ENCODE measurements at regions of chr11 and their contacts with region 1.

Region 1: DNA sequence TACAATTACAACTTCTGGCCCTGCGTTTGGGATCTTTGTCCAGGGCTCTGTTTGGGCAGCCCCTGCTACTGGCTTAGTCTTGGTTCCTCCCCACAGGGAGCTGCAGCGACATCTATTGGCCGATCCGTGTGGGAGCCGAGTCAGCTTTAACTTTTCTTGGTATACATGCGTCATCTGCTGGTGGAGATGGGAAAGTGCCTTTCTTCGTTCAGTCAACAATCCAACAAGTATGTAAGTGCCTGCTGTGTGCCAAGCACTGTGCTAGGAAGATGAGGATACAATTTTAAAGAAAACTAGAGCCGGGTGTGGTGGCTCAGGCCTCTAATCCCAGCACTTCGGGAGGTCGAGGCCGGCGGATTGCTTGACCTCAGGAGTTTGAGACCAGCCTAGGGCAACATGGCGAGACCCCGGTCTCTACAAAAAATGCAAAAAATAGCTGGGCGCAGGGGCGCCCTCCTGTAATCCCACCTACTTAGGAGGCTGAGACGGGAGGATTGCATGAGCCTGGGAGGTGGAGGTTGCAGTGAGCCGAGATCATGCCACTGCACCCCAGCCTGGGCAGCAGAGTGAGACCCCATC is 8.2 kb downstream of the TPBGL start:
- DNase-seq: peak; percentile 37
- H3K4me3 ChIP-seq: no peak overlapping the region
- CTCF ChIP-seq: peak; percentile 96

Region 2: DNA sequence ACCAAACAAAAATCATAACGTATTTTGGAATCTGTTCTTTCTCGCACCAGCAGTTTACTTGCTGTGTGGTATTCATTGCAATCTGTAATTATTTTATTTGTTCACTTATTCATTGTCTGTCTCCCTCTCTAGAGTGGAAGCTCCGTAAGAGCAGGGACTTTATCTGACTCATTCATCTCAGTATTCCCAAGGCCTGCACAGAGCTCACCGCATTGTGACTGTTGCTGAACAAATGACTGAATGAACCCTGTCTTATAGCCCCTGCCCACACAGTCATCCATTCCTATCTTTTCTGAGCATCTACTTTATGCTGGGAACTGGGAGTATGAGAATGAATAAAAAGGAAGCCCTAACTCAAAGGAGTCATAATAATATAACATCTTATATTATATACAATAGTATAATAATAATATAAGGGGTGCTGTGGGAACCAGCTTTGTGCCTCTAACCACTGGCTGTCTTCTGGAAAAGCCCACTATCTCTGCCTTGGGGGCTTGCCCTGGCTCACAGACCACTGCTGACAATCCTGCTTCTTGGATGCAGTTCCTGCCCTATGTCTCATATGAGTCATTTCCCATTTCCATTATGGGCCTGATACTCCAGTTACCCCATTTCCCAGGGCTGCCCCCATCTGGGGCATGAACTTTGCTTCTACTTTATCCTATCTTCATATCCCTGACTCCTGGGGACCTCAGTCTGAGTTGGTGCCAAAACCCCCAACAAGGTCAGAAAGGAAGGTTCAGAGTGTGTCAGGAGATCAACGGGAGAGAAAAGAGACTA is 310.9 kb before region 1 on chr11:
- CTCF ChIA-PET with region 1: interaction called, 149 read pairs
- POLR2A ChIA-PET with region 1: no interaction called
- DNase-seq: no peak
- H3K4me3 ChIP-seq: no peak overlapping the region
- CTCF ChIP-seq: no peak

Region 3: DNA sequence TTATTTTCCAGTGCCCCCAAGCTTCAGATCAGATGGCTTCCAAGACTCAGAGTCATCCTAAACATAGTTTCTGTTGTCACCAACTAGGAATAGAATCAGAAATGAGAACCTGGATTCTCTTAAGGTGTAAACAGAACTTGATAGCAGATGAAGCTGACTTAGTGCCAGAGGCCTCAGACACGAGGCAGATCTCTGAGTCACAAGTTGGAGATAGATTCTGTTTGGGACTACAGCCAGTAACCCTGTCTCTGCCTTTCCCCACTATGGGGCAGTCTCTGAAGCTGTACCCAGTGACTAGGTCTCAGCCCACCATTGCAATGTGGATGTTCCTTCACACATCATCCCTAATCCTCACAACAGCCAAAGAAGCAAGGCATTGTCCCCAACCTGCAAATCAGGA is 234.7 kb before region 1 on chr11:
- CTCF ChIA-PET with region 1: interaction called, 69 read pairs
- POLR2A ChIA-PET with region 1: no interaction called
- DNase-seq: peak; percentile 57
- H3K4me3 ChIP-seq: no peak overlapping the region
- CTCF ChIP-seq: no peak

Region 4: DNA sequence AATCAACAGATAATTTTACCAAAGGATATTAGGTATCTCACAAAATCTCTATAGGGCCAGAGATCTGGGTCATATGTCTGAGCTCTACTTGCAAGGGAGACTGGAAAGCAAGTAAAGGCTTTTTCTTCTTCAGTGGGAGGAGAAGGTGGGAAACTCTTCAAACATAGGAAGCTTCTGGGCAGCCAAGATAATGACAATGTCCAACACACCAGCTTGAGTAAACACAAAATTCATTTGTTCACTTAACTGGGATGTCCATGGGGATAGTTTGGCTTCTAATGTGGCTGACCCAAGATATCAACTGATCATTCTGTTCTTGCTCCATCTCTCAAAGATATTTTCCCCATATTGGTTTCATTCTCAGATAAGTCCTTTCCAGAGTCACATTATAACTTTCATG is 189.5 kb before region 1 on chr11:
- CTCF ChIA-PET with region 1: no interaction called
- POLR2A ChIA-PET with region 1: no interaction called
- DNase-seq: no peak
- H3K4me3 ChIP-seq: no peak overlapping the region
- CTCF ChIP-seq: no peak

Region 5: DNA sequence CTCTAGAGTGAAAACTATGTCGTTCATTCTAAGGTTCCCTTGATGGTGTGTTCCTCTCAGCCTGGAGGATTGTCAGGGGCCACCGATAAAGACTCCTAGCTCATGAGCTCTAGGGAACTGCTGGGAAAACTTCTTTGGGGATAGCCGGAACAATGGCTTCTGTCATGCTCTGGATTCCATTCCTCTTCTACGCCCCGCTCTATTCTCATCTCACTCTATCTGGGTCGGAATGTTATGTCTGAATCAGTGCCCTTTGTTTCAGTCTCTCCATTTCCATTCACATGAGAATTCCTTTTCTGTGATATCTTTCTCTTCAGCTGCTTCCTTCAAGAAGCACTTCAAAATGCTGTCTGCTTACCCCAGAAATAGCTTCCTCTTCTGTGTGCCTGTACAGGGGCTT is 114.8 kb before region 1 on chr11:
- CTCF ChIA-PET with region 1: interaction called, 501 read pairs
- POLR2A ChIA-PET with region 1: no interaction called
- DNase-seq: no peak
- H3K4me3 ChIP-seq: no peak overlapping the region
- CTCF ChIP-seq: no peak

Region 6: GRCh38 chr11:75150879-75151278 is 97.9 kb before region 1 on chr11 and contains the start of gene SLCO2B1:
- CTCF ChIA-PET with region 1: interaction called, 501 read pairs
- POLR2A ChIA-PET with region 1: no interaction called
- DNase-seq: no peak
- H3K4me3 ChIP-seq: no peak within 1 kb of the TSS
- CTCF ChIP-seq: no peak

Region 7: GRCh38 chr11:75263944-75264349 is 15.2 kb after region 1 on chr11:
- CTCF ChIA-PET with region 1: interaction called, 60 read pairs
- POLR2A ChIA-PET with region 1: no interaction called
- DNase-seq: no peak
- H3K4me3 ChIP-seq: no peak overlapping the region
- CTCF ChIP-seq: no peak

Region 8: DNA sequence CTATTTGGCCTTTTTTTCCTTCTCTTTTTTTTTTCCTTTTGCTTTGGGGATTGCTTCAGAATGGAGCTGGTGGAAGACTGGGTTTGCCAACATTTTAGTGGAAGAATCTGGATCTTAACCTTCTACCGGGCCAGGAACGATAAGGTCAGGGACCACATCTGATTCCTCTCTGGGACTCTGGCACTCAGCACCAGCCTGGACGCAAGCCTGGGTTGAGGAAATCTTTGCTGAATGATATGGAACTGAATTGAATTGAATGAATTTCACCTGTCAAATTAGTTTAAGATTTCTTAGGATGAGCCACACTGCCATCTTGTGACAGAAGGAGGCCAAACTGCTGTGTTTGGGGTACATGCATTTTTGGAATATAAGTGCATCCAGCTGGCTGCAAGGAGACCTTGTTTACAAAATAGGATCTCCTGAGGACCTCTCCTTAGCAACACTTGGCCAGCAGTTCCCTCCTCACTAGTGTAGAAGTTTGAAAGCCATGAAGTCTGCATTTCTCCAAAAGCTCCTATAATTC is 22.2 kb after region 1 on chr11:
- CTCF ChIA-PET with region 1: interaction called, 44 read pairs
- POLR2A ChIA-PET with region 1: no interaction called
- DNase-seq: no peak
- H3K4me3 ChIP-seq: no peak overlapping the region
- CTCF ChIP-seq: peak; percentile 5

Region 9: DNA sequence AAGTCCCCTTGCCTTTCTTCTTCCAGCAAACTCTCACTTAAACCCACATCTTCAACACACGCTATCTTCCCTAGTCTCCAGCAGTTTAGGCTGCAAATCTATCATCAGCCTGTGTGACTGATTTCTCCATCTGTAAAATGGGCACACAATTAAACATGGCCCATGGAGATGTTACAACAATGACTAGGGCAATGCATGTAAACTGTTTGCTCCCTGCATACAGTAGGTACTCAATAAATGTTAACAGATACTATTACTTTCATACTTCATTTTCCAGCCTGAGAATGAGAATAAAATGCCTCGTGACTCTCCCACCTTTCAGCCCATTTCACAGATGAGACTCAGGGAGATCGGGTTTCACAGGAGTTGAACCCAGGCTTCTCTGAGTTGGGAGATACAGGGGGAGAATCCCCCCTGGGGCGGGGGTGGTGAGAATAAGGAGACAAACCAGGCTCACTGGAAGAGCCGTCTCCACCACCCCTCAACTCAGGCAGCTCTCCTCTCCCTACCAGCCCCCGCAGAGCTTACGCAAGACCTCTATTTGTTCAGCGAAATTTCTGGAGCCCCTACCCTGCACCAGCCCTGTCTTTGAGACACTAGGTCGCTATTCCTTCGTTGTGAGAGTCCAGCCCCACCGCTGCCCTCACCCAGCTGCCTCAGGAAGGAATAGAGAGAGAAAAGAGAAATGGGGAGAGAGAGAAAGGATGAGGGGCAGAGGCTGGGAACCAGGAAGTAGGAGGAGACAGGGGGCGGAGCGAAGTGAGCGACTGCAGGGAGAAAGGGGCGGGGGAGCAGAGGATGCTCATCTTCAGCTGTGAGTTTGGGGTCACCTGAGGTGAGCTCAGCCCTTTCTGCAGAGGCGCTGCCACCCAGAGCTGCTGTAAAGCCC is 226.3 kb after region 1 on chr11:
- CTCF ChIA-PET with region 1: no interaction called
- POLR2A ChIA-PET with region 1: no interaction called
- DNase-seq: no peak
- H3K4me3 ChIP-seq: peak overlapping the region; percentile 18; the same call in 1 of the 2 replicates
- CTCF ChIP-seq: no peak

Region 10: DNA sequence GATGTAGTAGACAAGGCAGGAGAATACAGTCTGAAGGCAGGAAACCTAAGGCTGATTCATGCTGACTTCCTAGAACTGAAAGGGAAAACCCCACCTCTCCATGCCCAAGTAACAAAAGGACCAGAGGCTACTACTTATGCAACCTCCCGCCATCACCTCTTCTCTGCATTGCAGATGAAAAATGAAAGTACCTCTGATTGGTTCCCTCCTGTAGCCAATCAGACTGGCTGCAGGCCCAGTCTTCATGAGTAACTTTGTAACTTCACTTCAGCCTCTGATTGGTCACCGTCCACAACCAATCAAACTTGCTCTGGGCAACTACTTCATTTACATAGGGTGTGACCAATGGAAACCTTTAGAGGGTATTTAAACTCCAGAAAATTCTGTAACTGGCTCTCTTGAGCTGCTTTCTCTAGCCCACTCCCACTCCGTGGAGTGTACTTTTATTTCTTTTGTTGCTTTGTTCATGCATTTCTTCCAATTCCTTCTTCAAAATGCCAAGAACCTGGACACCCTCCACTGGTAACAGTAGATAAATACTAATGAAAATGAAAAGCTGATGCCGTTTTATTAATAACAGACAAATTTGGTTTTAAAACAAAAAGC is 425.3 kb after region 1 on chr11:
- CTCF ChIA-PET with region 1: no interaction called
- POLR2A ChIA-PET with region 1: no interaction called
- DNase-seq: no peak
- H3K4me3 ChIP-seq: no peak overlapping the region
- CTCF ChIP-seq: no peak

Region 11: DNA sequence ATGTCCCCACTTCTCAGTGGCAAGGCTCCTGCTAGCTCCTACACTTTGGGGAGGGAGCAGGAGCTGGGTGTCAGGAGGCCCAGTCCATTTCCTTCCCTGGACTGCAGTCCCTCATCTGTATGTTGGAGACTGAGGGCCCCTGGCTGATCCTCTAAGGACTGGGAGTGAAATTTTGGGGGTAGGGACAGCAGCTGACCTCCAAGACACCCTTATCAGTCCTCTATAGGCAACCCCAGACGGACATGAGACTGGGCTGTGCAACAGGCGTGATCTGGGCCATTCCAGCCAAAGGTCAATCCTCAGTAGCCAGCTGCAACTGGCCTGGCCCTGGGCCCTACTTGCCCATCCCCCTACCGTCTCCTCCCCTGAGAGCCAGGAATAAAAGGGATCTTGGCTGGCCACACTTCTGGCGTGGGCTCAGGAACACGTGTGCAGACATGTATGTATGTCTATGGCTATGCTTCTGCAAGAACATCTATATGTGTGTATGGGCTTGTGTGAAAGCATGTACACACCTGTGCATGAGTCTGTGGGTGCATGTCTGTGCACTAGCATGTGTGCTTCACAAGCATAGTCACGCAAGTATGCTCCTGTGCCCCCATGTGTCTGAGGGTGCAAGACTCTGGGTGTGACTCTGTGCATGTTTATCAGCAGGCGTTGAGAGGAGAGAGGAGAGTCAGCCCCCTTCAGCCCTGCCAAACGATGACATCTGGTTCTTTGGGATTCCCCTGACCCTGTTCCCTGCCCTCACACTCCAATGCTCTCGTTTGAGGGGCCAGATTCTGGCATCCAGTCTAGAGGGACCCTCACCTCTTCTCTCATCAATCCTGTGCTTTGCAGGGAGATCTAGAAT is 495.2 kb after region 1 on chr11:
- CTCF ChIA-PET with region 1: no interaction called
- POLR2A ChIA-PET with region 1: no interaction called
- DNase-seq: no peak
- H3K4me3 ChIP-seq: no peak overlapping the region
- CTCF ChIP-seq: no peak